RWPE1 (cell line): ENCODE measurements at regions of chr7 and their contacts with region 1.

Region 1: DNA sequence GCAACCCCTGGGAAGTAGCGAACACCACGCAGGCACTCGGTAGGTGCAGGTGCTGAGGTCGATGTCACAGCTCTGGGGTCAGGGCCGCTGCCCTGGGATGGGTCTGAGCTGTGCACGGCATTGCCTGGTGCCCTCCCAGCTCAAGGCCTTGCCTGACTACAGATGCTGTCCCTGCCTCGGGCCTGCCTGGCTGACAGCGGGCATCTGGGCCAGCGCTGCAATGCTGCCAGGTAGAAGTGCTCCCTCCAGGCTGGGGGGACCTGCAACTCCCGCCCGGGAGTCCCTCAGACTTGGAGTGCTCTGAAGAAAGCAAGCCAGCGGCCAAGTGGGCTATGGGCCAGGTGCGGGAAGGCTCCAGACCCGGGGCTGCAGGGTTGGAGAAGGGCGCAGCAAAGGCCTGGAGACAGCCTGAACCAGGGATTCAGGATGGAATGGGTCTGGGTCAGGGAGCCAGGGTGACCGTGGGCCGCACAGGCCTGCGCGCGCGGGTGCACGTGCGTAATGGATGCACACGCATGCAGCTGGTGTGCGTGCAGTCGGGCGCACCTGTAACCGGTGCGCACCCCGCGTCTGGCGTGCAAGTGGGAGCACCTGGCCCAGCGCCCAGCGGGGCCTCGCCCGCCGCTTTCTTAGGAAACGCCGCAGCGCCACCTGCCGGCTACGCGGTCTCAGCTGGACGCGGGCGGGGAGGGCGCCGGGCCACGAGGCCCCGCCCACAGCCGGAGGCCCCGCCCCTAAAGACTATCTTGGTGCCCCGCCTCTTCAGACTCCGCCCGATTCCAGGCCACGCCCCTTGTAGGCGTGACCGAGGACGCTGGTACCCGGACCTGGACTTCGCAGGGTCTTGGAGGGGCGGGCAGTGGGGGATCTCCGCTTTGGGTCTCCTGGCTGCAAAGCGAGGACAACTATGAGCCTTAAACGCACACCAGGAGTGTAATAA is 46.7 kb downstream of the MICALL2 start:
- DNase-seq: peak; percentile 99
- H3K27ac ChIP-seq: no peak overlapping the region
- CTCF ChIP-seq: peak; percentile 93

Region 2: DNA sequence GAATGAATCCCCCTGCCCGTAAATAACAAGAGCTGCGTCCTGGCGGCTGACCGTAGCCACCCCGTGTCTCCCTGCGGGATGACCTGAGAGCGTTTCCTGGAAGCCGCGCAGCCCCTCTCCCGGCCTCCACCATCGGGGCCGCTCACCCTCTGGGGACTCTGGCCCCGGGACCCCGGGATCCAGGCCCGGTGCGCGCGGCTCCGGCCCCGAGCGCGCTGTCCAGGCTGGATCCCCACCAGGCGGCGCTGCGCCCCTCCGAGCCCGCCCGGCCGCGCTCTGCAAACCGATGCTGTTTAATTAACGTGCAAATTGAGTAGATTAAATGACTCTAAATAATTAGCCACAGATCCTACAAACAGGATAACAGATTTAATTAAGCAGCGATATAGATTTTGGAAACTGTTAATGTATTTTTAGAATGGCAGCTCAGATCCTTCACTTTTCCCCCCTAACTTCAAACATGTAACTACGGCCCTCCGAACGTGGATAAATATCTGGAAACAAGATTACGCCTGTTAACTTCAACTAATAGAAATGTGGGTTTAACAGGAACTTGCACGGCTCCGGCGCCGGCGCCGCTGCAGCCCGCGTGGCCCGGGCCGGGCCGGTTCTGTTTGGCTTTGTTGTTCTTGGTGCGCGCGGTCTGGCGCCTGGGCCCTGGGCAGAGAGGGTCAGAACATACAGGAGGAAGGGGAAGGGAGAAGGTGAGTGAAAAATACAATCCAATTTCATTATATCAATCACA is 187.0 kb before region 1 on chr7:
- CTCF ChIA-PET with region 1: interaction called, 13 read pairs
- POLR2A ChIA-PET with region 1: no interaction called
- DNase-seq: peak; percentile 46
- H3K27ac ChIP-seq: no peak overlapping the region
- CTCF ChIP-seq: peak; percentile 95

Region 3: DNA sequence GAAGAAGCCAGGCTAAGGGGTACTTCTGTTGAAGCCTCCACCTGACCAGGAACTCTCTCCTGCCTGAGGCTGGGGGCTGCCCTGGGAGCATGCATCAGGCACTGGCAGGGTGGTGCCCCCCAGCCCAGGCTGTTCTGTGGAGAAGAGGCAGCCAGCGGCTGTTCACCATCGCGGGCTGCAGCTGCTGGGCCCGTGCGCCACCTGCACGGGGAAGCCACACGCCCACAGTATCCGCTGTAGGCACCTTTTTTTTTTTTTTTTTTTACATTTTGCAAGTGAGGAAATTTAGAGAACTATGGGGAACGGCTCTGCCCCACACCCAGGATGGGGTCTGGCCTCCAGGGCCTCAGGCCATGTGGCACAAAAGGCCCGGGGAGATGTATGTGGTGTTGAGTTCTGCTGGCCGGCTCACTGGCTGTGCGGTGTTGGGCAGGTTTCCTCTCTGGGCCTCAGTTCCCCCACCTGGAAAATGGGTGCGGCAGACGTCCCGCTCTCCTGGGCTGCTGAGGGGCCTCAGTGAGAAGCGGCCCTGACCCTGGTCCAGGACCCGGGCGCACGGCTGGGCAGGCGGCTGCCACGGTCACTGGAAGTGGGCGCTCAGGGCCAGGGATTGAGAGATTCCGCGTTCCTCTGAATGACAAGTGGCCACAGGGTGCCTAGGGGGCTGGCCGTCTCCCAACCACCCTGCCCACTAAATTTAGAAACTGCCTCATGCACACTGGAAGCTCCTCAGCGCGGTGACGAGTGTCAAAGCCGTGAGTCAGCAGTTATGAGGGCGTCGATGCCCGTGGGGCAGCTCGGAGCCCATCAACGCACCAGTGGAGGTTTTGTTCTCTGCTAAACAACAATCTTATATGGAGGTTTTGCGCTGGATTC is 100.4 kb after region 1 on chr7:
- CTCF ChIA-PET with region 1: no interaction called
- POLR2A ChIA-PET with region 1: no interaction called
- DNase-seq: peak; percentile 90
- H3K27ac ChIP-seq: peak overlapping the region; percentile 71
- CTCF ChIP-seq: no peak